HepG2 (cell line): ENCODE measurements at regions of chr2 and their contacts with region 1.

Region 1: GRCh38 chr2:240560480-240561326 is 546 bp downstream of the DUSP28 start:
- DNase-seq: peak; percentile 97
- ATAC-seq: peak; percentile 76
- H3K4me3 ChIP-seq: peak overlapping the region; percentile 80 to 85 (median 80)
- H3K27ac ChIP-seq: peak overlapping the region; percentile 90
- H3K4me1 ChIP-seq: peaks cover 54% of the 10 kb centered on the region
- H3K27me3 ChIP-seq: no peaks in the 10 kb centered on the region
- CTCF ChIP-seq: peak; percentile 51
- EP300 ChIP-seq: peak in 1 of 2 experiments; percentile 45; a peak in 1 of 4 replicates
- POLR2A ChIP-seq: peak in 1 of 2 experiments; percentile 98; a peak in 2 of 4 replicates
- RAD21 ChIP-seq: peak; percentile 81

Region 2: GRCh38 chr2:239991689-239992314 is 568.9 kb before region 1 on chr2:
- CTCF ChIA-PET with region 1: no interaction called
- POLR2A ChIA-PET with region 1: no interaction called
- in situ Hi-C with region 1: no loop called
- intact Hi-C with region 1: no loop called
- DNase-seq: peak; percentile 48
- ATAC-seq: peak; percentile 63
- H3K4me3 ChIP-seq: no peak overlapping the region
- H3K27ac ChIP-seq: no peak overlapping the region
- H3K4me1 ChIP-seq: no peaks in the 10 kb centered on the region
- H3K27me3 ChIP-seq: no peaks in the 10 kb centered on the region
- CTCF ChIP-seq: peak; percentile 77
- EP300 ChIP-seq: no peak
- POLR2A ChIP-seq: no peak
- RAD21 ChIP-seq: peak; percentile 42; the same call in 1 of the 2 replicates

Region 3: DNA sequence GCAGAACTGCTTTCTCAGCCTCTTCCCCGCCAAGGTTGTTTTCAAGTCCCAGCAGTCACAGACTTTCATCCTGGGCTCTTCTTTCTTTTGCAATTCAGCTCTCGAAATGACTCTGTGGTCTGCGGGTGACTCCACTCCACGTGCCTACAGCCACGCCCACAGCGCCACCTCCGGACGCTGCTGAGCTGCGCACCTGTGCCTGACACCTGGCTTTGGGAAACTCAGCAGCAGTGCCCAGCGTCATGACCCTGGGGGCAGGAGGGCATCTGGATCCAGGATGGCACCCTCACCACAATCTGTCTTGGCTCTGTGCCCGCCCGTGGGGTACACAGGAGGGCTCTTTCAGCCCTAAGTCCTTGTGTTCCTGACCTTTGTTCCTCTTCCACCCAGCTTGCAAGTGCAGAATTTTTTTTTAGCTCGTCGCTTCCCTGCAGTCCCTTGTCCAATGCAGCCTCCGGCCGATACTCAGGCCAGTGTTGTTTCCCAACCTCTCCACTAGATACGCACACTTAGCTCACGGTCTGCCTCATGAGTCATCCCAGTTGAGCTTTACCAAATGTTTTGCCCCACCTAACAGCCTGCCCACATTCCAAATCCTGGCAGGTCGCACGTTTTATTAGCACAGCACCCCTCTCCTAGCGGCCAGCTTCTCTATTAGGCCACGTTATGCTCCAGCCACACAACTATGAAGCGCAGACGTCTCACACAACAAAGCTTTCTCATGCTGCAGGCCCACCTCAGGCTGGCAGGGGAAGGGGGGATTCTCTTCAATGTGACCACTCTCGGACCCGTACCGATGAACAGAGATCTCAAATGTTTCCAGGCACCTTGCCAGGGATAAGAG is 19.3 kb after region 1 on chr2:
- CTCF ChIA-PET with region 1: interaction called, 4 read pairs
- POLR2A ChIA-PET with region 1: interaction called, 149 read pairs
- in situ Hi-C with region 1: no loop called
- intact Hi-C with region 1: no loop called
- DNase-seq: peak; percentile 96
- ATAC-seq: peak; percentile 83
- H3K4me3 ChIP-seq: peak overlapping the region; percentile 33 to 63 (median 44)
- H3K27ac ChIP-seq: peak overlapping the region; percentile 80
- H3K4me1 ChIP-seq: peaks cover 61% of the 10 kb centered on the region
- H3K27me3 ChIP-seq: no peaks in the 10 kb centered on the region; a peak in 1 of 5 replicates
- CTCF ChIP-seq: peak; percentile 91
- EP300 ChIP-seq: peak in 1 of 2 experiments; percentile 24; a peak in 2 of 4 replicates
- POLR2A ChIP-seq: peak in 1 of 2 experiments; percentile 48; a peak in 2 of 4 replicates
- RAD21 ChIP-seq: peak; percentile 49

Region 4: DNA sequence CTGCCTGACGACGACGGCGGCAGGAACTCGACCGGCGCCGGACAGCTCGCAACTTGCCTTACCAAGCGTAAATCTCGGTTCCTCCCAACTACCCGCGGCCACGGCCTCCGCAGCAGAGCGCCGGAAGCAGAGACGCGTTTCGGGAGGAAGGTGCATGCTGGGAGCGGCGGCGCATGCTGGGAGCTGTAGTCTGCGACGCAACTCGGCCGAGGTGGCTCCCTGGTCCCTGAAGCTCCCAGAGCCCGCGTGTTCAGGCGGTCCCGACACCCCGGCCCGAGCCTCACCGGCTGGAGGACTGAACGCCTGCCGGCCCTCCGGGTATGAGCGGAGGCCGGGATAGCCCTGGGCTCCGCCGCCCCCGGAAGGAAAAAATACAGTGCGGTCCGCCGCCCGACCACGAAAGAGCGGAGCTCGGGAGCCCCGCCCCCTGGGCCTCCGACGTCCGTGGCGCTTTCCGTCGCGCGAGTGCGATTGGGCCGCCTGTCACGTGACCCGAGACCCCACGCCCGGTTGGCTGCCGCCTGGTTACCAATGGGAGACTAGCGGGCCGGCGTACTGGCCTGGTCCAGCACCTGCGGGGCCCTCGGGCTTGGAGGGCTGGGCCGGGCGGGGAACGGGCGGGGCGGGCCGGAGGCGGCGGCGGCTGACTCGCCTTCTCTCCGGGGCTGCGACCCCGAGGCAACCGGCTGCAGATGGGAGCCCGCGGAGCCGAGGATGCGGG is 25.7 kb after region 1 on chr2 and contains the start of gene CAPN10:
- CTCF ChIA-PET with region 1: interaction called, 3 read pairs
- POLR2A ChIA-PET with region 1: interaction called, 149 read pairs
- in situ Hi-C with region 1: no loop called
- intact Hi-C with region 1: no loop called
- DNase-seq: peak; percentile 94
- ATAC-seq: peak; percentile 92
- H3K4me3 ChIP-seq: peak within 1 kb of the TSS; percentile 83 to 90 (median 88)
- H3K27ac ChIP-seq: peak within 1 kb of the TSS; percentile 89
- H3K4me1 ChIP-seq: peaks cover 59% of the 10 kb centered on the region
- H3K27me3 ChIP-seq: peaks cover 0 to 4% of the 10 kb centered on the region in 2 experiments; a peak in 1 of 5 replicates
- CTCF ChIP-seq: no peak; the same call in 1 of the 2 replicates
- EP300 ChIP-seq: peak; percentile 31 to 53; a peak in 1 of 4 replicates
- POLR2A ChIP-seq: peak in 1 of 2 experiments; percentile 81; a peak in 2 of 4 replicates
- RAD21 ChIP-seq: no peak; the same call in none of the 2 replicates
- total RNA-seq, gene CAPN10: 16.5 and 32.4 TPM in 2 replicates

Region 5: GRCh38 chr2:240714747-240715725 is 154.3 kb after region 1 on chr2:
- CTCF ChIA-PET with region 1: no interaction called
- POLR2A ChIA-PET with region 1: no interaction called
- in situ Hi-C with region 1: no loop called
- intact Hi-C with region 1: no loop called
- DNase-seq: no peak
- ATAC-seq: no peak
- H3K4me3 ChIP-seq: no peak overlapping the region
- H3K27ac ChIP-seq: no peak overlapping the region
- H3K4me1 ChIP-seq: no peaks in the 10 kb centered on the region
- H3K27me3 ChIP-seq: peaks cover 58 to 93% of the 10 kb centered on the region in 2 experiments
- CTCF ChIP-seq: no peak
- EP300 ChIP-seq: no peak
- POLR2A ChIP-seq: no peak
- RAD21 ChIP-seq: no peak

Region 6: DNA sequence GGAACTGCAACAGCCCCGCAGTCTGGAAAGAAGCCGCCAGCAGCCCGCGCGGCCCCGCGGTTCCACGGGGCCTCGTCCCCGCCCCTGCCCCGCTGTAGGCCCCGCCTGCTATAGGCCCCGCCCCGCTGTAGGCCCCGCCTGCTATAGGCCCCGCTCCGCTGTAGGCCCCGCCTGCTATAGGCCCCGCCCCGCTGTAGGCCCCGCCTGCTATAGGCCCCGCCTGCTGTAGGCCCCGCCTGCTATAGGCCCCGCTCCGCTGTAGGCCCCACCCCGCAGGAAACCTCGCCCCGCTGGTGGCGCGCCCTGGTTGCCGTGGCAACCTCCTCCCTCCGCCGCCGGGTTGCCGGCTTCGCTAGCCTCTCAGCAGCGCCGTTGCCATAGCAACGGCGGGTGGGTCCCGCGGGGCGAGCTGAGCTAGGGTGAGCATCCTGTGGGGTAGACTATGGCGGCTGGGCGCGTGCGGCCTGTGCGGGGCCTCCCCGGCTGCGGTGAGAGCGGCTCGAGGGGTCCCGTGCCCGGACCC is 271.6 kb after region 1 on chr2:
- CTCF ChIA-PET with region 1: no interaction called
- POLR2A ChIA-PET with region 1: no interaction called
- in situ Hi-C with region 1: no loop called
- intact Hi-C with region 1: loop called (anchors 5 kb)
- DNase-seq: peak; percentile 85
- ATAC-seq: peak; percentile 85
- H3K4me3 ChIP-seq: peak overlapping the region in 2 of 3 experiments; percentile 19 to 57; a peak in 2 of 6 replicates
- H3K27ac ChIP-seq: no peak overlapping the region
- H3K4me1 ChIP-seq: peaks cover 7% of the 10 kb centered on the region
- H3K27me3 ChIP-seq: peaks cover 2 to 59% of the 10 kb centered on the region in 2 experiments
- CTCF ChIP-seq: no peak
- EP300 ChIP-seq: no peak
- POLR2A ChIP-seq: no peak
- RAD21 ChIP-seq: no peak

Region 7: GRCh38 chr2:240851078-240851991 is 290.6 kb after region 1 on chr2:
- CTCF ChIA-PET with region 1: no interaction called
- POLR2A ChIA-PET with region 1: no interaction called
- in situ Hi-C with region 1: no loop called
- intact Hi-C with region 1: no loop called
- DNase-seq: peak; percentile 75
- ATAC-seq: peak; percentile 93
- H3K4me3 ChIP-seq: no peak overlapping the region; a peak in 1 of 6 replicates
- H3K27ac ChIP-seq: no peak overlapping the region
- H3K4me1 ChIP-seq: peaks cover 14% of the 10 kb centered on the region
- H3K27me3 ChIP-seq: peaks cover 3 to 39% of the 10 kb centered on the region in 2 experiments; a peak in 4 of 5 replicates
- CTCF ChIP-seq: peak; percentile 100
- EP300 ChIP-seq: no peak
- POLR2A ChIP-seq: no peak
- RAD21 ChIP-seq: peak; percentile 98

Region 8: DNA sequence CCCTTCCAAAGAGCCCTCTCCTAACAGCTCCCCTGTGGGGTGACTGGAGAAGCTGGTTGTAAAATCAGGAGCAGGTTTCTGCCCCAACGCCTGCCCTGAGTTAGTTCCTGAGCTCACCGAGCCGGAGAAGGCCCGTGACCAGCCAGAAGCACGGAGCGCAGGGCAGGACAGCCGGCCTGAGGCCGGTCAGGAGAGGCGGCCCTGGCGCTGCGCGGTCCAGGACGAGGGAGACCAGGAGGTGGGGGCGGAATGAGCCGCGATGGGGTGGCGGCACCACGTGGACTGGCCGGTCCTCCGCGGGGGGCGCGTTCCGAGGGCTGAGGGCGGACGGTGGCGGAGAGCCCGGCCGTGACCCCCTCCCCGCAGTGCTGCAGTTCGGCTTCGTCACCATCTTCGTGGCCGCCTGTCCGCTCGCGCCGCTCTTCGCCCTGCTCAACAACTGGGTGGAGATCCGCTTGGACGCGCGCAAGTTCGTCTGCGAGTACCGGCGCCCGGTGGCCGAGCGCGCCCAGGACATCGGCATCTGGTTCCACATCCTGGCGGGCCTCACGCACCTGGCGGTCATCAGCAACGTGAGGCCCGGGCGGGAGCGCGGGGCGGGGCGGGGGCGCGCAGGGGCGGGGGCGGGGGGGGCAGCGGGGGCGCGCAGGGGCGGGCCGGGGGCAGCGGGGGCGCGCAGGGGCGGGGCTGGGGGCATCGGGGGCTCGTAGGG is 656.8 kb after region 1 on chr2:
- CTCF ChIA-PET with region 1: no interaction called
- POLR2A ChIA-PET with region 1: interaction called, 4 read pairs
- in situ Hi-C with region 1: loop called (anchors 25 kb)
- intact Hi-C with region 1: no loop called
- DNase-seq: peak; percentile 80
- ATAC-seq: peak; percentile 75
- H3K4me3 ChIP-seq: peak overlapping the region; percentile 50 to 76 (median 74)
- H3K27ac ChIP-seq: peak overlapping the region; percentile 79
- H3K4me1 ChIP-seq: peaks cover 64% of the 10 kb centered on the region
- H3K27me3 ChIP-seq: peaks cover 4 to 21% of the 10 kb centered on the region in 2 experiments; a peak in 3 of 5 replicates
- CTCF ChIP-seq: peak; percentile 56
- EP300 ChIP-seq: 0 out of 4 replicates have a peak, but pooled peaks of 1 of the 2 experiments have one; percentile 28
- POLR2A ChIP-seq: peak in 1 of 2 experiments; percentile 66; a peak in 2 of 4 replicates
- RAD21 ChIP-seq: peak; percentile 69